ENCODE measurements at regions of chr17 and their contacts with region 1.

Region 1: GRCh38 chr17:36629252-36629847 is 28.0 kb downstream of the MRM1 start:
- DNase-seq: peak; percentile 79 to 86
- ATAC-seq: peak; percentile 87 to 98 (median 94)
- H3K4me3 ChIP-seq: no peak overlapping the region
- H3K4me3 Mint-ChIP-seq: no peak overlapping the region
- H3K27ac ChIP-seq: no peak overlapping the region
- H3K27ac Mint-ChIP-seq: no peak overlapping the region
- H3K4me1 ChIP-seq: no peaks in the 10 kb centered on the region
- H3K4me1 Mint-ChIP-seq: no peaks in the 10 kb centered on the region
- H3K27me3 ChIP-seq: no peaks in the 10 kb centered on the region
- H3K27me3 Mint-ChIP-seq: peaks cover 0 to 9% of the 10 kb centered on the region in 2 donors
- CTCF ChIP-seq: peak; percentile 97

Region 2: DNA sequence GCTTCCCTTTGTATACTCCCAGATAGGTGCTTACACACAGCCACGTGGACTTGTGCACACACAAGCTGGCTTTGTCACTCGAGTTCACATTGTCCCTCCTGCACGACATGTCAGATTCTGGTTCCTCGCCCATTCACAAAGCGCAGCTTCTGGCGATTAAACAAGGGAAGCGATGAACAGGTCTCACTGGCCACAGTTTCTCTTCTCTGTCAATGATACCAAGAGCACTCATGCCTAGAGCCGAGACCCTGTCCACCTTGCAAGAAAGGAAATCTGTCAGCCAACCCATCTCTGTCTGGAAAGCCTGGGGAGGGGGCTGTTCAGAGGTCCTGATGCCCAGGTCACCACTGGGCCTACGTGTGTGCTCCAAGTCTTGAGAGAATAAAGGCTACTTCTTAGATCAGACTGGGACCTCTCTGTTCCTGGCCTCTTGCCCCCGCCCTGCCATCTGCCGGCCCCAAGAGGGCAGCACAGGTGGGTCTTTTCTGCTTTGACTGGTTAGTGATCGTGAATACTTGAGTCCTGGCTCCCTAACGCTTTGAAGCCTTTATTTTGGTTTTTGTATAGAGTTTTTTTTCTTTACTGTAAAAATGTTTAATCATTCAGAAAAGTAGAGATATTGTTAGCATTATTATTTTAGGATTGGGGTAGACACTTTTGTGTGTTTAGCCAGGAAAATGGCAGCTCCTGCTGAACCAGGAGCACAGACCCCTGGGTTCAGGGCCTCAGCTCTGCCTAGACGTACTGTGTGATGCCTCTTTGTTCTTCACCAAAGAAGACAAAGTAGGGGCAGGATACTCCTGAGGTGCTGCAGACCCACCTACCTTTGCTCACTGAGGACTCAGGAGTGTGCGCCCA is 76.8 kb after region 1 on chr17:
- intact Hi-C with region 1: loop called (anchors 2 kb)
- DNase-seq: peak; percentile 33 to 68
- ATAC-seq: peak; percentile 66 to 92 (median 84)
- H3K4me3 ChIP-seq: no peak overlapping the region
- H3K4me3 Mint-ChIP-seq: no peak overlapping the region
- H3K27ac ChIP-seq: no peak overlapping the region
- H3K27ac Mint-ChIP-seq: no peak overlapping the region
- H3K4me1 ChIP-seq: peaks cover 4% of the 10 kb centered on the region
- H3K4me1 Mint-ChIP-seq: no peaks in the 10 kb centered on the region
- H3K27me3 ChIP-seq: peaks cover 17% of the 10 kb centered on the region
- H3K27me3 Mint-ChIP-seq: peaks cover 33 to 39% of the 10 kb centered on the region in 2 donors
- CTCF ChIP-seq: peak; percentile 72

Region 3: DNA sequence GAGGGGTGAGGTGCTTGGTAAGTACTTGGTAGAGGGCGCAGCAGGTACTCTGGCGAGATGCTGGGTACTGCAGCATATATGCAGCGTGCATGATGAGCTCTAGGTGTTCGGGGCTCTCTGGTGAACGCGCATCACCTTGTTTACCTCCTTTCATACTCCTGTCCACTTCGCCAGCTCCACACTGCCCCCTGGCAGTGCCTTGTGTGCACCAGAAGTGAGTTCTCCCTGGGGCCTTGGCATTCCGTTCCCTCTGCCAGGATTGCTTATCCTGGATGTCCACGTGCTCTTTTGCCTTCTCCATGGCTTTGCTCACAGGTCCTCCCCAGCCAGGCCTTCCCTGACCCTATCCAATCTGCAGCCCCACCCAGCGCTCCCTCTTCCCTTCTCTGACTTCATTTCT is 126.2 kb after region 1 on chr17:
- intact Hi-C with region 1: loop called (anchors 1 kb)
- DNase-seq: peak; percentile 36 to 64
- ATAC-seq: peak in 1 of 3 donors; percentile 69
- H3K4me3 ChIP-seq: no peak overlapping the region
- H3K4me3 Mint-ChIP-seq: no peak overlapping the region
- H3K27ac ChIP-seq: no peak overlapping the region
- H3K27ac Mint-ChIP-seq: no peak overlapping the region
- H3K4me1 ChIP-seq: no peaks in the 10 kb centered on the region
- H3K4me1 Mint-ChIP-seq: no peaks in the 10 kb centered on the region
- H3K27me3 ChIP-seq: peaks cover 2% of the 10 kb centered on the region
- H3K27me3 Mint-ChIP-seq: peaks cover 0 to 3% of the 10 kb centered on the region in 2 donors
- CTCF ChIP-seq: peak; percentile 37

Region 4: GRCh38 chr17:37047631-37048104 is 418.3 kb after region 1 on chr17:
- intact Hi-C with region 1: loop called (anchors 1 kb)
- DNase-seq: peak; percentile 66 to 87
- ATAC-seq: peak; percentile 86 to 96 (median 93)
- H3K4me3 ChIP-seq: no peak overlapping the region
- H3K4me3 Mint-ChIP-seq: peak overlapping the region; percentile 1
- H3K27ac ChIP-seq: no peak overlapping the region
- H3K27ac Mint-ChIP-seq: peak overlapping the region; percentile 69 to 83
- H3K4me1 ChIP-seq: peaks cover 4% of the 10 kb centered on the region
- H3K4me1 Mint-ChIP-seq: peaks cover 14 to 15% of the 10 kb centered on the region in 2 donors
- H3K27me3 ChIP-seq: no peaks in the 10 kb centered on the region
- H3K27me3 Mint-ChIP-seq: no peaks in the 10 kb centered on the region
- CTCF ChIP-seq: peak; percentile 81

Region 5: DNA sequence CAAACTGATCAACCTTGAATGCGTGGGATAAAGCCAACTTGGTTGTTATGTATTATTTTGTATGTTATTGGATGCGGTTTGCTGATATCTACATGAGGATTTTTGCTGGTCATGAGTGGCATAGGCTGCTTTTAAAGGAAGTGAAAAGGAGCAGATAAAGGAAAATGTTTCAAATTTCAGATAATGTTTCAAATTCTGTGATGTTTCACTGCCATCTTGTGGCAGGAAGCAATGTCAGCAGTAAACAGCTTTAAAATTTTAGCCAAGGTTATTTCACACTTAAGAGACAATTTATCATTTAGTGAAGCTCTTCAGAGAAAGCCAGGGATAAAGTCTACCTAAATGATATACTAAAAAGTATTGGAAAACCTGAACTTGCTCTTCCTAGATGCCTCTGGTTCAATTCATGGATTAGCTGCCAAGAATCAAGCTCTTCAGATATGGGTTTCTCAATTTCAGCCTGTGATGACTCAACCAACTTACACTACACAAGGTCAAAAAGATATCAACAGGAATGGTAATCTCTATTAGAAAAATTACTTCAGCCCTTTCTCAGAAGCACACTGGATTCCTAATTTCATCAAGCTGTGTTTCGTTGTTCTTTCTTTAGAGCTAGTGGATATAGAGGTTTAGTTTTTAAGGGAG is 610.5 kb after region 1 on chr17:
- intact Hi-C with region 1: loop called (anchors 2 kb)
- DNase-seq: peak in 1 of 2 donors; percentile 54
- ATAC-seq: no peak
- H3K4me3 ChIP-seq: no peak overlapping the region
- H3K4me3 Mint-ChIP-seq: no peak overlapping the region
- H3K27ac ChIP-seq: no peak overlapping the region
- H3K27ac Mint-ChIP-seq: no peak overlapping the region
- H3K4me1 ChIP-seq: no peaks in the 10 kb centered on the region
- H3K4me1 Mint-ChIP-seq: no peaks in the 10 kb centered on the region
- H3K27me3 ChIP-seq: no peaks in the 10 kb centered on the region
- H3K27me3 Mint-ChIP-seq: no peaks in the 10 kb centered on the region
- CTCF ChIP-seq: peak; percentile 61